ENCODE measurements at regions of chr6 and their contacts with region 1.

Region 1: DNA sequence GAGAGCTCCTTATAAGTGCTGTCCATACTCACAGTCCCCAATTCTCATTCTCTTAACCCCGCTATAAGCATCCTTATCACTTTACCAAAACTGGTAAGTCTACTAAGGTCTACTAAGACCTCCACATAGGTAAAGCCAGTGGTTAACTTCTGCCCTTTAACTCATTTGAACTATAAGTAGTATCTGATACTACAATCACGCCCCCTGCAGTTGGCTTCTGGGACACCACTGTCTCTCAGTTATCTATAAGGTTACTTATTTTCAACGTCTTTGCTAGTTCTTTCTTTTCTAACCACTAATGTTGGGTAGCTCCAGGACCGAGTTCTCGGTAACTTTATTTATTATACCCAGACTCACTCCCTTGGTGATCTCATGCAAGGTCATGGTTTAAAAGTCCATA is 142.6 kb downstream of the ARHGAP18 start:
- DNase-seq: peak; percentile 44
- H3K4me3 Mint-ChIP-seq: no peak overlapping the region
- H3K27ac Mint-ChIP-seq: no peak overlapping the region
- H3K4me1 Mint-ChIP-seq: no peaks in the 10 kb centered on the region
- H3K27me3 Mint-ChIP-seq: peaks cover 5% of the 10 kb centered on the region

Region 2: DNA sequence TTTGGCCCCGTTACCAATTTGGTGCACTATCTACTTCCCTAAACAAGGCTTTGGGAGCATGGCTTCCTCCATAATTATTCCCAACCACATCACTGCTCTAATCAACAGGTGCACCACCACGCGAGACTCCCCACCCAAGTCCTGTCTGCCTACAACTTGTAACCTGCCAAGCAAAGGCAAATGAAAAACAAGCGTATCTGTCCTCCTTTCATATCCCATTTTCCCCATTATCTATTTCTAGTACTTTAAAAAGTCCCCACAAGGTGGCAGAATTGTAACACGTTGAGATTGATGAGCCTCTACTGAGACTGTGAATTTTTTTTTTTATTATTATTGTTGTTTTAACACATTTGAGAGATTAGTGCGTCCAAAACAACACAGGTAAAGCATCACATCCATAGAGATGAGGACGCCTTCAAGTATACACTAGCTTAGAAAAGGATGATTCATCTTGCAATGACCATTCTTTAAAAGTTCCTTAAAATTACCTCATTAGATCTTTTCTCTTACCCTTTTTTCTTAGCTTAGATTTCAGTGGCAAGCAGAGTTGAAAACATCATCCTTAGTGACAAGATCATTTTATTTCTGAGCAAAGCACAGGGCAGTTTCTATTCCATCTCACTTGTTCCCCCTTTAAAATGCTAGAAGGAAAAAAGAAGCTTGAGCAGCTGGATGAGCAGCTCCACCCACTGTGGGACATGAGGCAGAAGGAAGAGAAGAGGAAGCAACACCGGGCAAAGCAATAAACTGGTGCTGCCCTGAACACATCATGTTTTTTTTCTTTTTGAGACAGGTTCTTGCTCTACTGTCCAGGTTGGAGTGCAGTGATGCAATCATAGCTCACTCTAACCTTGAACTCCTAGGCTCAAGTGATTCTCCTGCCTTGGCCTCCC is 68.2 kb before region 1 on chr6:
- CTCF ChIA-PET with region 1: interaction called, 12 read pairs
- POLR2A ChIA-PET with region 1: no interaction called
- DNase-seq: no peak
- H3K4me3 Mint-ChIP-seq: peak overlapping the region; percentile 18
- H3K27ac Mint-ChIP-seq: no peak overlapping the region
- H3K4me1 Mint-ChIP-seq: peaks cover 34% of the 10 kb centered on the region
- H3K27me3 Mint-ChIP-seq: no peaks in the 10 kb centered on the region